CD8-positive, alpha-beta T cell (primary cell): ENCODE measurements at regions of chr1 and their contacts with region 1.

Region 1: DNA sequence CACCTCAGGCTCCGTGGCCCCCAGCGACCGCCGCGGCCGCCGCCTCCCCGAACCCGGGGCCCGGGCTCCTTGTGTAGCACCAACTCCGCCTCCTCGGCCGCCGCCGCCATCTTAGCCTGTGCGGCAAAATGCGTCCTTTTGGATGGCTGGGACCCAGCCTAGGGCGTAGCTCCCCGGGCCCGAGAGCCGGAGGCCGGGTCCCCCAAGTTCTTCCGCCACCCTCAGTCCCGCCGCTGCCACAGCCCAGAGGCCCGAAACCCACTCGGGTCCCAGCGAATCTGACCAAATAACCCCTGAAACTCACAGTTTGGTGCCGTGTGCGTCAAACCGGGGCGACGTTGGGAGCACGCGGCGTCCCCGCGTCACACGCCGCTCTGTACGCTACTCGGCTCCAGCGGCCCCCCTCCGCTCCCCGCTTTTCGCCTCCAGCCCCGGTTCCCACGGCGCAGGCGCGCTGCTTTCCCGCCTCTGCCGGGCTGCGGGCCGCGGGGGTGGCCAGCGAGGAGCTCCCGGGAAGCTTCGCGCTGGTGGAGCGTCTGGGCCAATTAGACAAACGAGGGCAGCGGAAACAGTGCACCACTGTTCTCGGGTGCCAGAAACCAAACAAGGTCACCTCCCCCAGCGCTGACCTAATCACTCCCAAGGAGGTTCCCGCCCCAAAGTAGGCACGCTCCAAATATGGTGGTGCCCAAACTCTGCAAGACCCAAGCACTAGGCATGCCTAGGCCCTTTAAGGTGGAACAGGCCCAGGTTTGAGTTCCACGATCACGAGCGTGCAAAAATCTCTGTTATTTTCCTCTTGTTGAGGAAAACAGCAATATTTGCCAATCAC is at the start of gene ZNF644:
- DNase-seq: peak; percentile 76 to 97 (median 89)
- ATAC-seq: peak; percentile 84
- H3K4me3 ChIP-seq: peak within 1 kb of the TSS; percentile 75 to 98
- H3K4me3 Mint-ChIP-seq: peak within 1 kb of the TSS; percentile 97
- H3K27ac ChIP-seq: peak within 1 kb of the TSS; percentile 99 to 100
- H3K27ac Mint-ChIP-seq: peak within 1 kb of the TSS; percentile 99
- H3K4me1 ChIP-seq: peaks cover 49% of the 10 kb centered on the region
- H3K4me1 Mint-ChIP-seq: peaks cover 64% of the 10 kb centered on the region
- H3K27me3 ChIP-seq: no peaks in the 10 kb centered on the region
- H3K27me3 Mint-ChIP-seq: no peaks in the 10 kb centered on the region
- CTCF ChIP-seq: no peak
- total RNA-seq, gene ZNF644: 105 to 109 TPM

Region 2: GRCh38 chr1:90729504-90730242 is 292.2 kb before region 1 on chr1:
- CTCF ChIA-PET with region 1: no interaction called
- POLR2A ChIA-PET with region 1: no interaction called
- intact Hi-C with region 1: loop called (anchors 5 kb)
- DNase-seq: peak in 1 of 9 experiments; percentile 27
- ATAC-seq: peak; percentile 21
- H3K4me3 ChIP-seq: peak overlapping the region in 1 of 2 experiments; percentile 22
- H3K4me3 Mint-ChIP-seq: peak overlapping the region; percentile 79
- H3K27ac ChIP-seq: no peak overlapping the region
- H3K27ac Mint-ChIP-seq: no peak overlapping the region
- H3K4me1 ChIP-seq: peaks cover 40% of the 10 kb centered on the region
- H3K4me1 Mint-ChIP-seq: peaks cover 52% of the 10 kb centered on the region
- H3K27me3 ChIP-seq: peaks cover 41 to 64% of the 10 kb centered on the region in 2 experiments
- H3K27me3 Mint-ChIP-seq: peaks cover 85% of the 10 kb centered on the region
- CTCF ChIP-seq: peak; percentile 34

Region 3: GRCh38 chr1:90850898-90851710 is 170.8 kb before region 1 on chr1:
- CTCF ChIA-PET with region 1: no interaction called
- POLR2A ChIA-PET with region 1: no interaction called
- intact Hi-C with region 1: loop called (anchors 1 to 5 kb)
- DNase-seq: peak; percentile 41 to 87 (median 73)
- ATAC-seq: peak; percentile 96
- H3K4me3 ChIP-seq: peak overlapping the region; percentile 64 to 78
- H3K4me3 Mint-ChIP-seq: peak overlapping the region; percentile 81
- H3K27ac ChIP-seq: no peak overlapping the region
- H3K27ac Mint-ChIP-seq: no peak overlapping the region
- H3K4me1 ChIP-seq: peaks cover 15% of the 10 kb centered on the region
- H3K4me1 Mint-ChIP-seq: peaks cover 12% of the 10 kb centered on the region
- H3K27me3 ChIP-seq: peaks cover 14 to 18% of the 10 kb centered on the region in 2 experiments
- H3K27me3 Mint-ChIP-seq: peaks cover 53% of the 10 kb centered on the region
- CTCF ChIP-seq: peak; percentile 62

Region 4: DNA sequence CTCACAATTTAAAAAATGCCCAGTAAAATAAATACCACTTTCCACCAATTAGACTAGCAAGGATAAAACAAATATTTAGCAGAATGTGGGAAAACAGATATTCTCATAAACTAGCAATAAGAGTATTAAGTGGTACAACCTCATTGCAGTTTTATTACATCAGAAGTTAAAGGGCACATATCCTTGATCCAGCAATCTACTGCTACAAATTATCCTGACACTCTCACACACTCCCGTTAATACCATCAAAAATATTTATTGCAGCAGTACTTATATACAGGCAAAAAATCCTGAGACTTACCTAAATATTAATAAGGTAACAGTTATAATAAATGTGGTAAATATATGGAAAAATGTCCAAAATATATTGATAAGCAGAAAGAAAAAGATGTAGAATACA is 44.4 kb before region 1 on chr1:
- CTCF ChIA-PET with region 1: no interaction called
- POLR2A ChIA-PET with region 1: no interaction called
- intact Hi-C with region 1: loop called in 1 of 2 experiments (anchors 5 kb)
- DNase-seq: no peak
- ATAC-seq: no peak
- H3K4me3 ChIP-seq: no peak overlapping the region
- H3K4me3 Mint-ChIP-seq: no peak overlapping the region
- H3K27ac ChIP-seq: no peak overlapping the region
- H3K27ac Mint-ChIP-seq: no peak overlapping the region
- H3K4me1 ChIP-seq: no peaks in the 10 kb centered on the region
- H3K4me1 Mint-ChIP-seq: peaks cover 49% of the 10 kb centered on the region
- H3K27me3 ChIP-seq: no peaks in the 10 kb centered on the region
- H3K27me3 Mint-ChIP-seq: no peaks in the 10 kb centered on the region
- CTCF ChIP-seq: no peak

Region 5: DNA sequence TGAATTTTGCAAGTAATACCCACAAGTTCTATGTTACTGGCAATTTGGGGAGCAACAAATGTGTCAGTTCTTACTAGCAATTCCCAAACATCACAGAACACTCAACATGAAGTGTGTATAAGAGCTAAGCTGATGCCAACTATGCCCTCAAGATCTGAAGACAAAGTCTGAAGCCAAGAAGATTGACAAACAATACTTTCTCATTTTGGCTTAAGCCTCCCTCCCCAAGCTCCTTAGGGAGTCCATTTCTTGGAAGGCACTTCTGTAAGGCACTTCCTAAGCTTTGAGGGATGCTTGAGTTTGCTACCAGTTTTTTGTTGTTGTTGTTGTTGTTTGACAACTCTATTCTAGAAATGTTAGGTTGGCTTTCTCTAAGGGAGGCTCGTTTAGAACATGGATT is 154.3 kb after region 1 on chr1:
- CTCF ChIA-PET with region 1: no interaction called
- POLR2A ChIA-PET with region 1: no interaction called
- intact Hi-C with region 1: no loop called
- DNase-seq: no peak
- ATAC-seq: no peak
- H3K4me3 ChIP-seq: no peak overlapping the region
- H3K4me3 Mint-ChIP-seq: no peak overlapping the region
- H3K27ac ChIP-seq: no peak overlapping the region
- H3K27ac Mint-ChIP-seq: no peak overlapping the region
- H3K4me1 ChIP-seq: no peaks in the 10 kb centered on the region
- H3K4me1 Mint-ChIP-seq: no peaks in the 10 kb centered on the region
- H3K27me3 ChIP-seq: no peaks in the 10 kb centered on the region
- H3K27me3 Mint-ChIP-seq: peaks cover 24% of the 10 kb centered on the region
- CTCF ChIP-seq: no peak

Region 6: GRCh38 chr1:91404151-91405012 is 382.5 kb after region 1 on chr1 and contains the start of gene HFM1:
- CTCF ChIA-PET with region 1: no interaction called
- POLR2A ChIA-PET with region 1: no interaction called
- intact Hi-C with region 1: loop called in 1 of 2 experiments (anchors 5 kb)
- DNase-seq: peak; percentile 21 to 83 (median 61)
- ATAC-seq: peak; percentile 99
- H3K4me3 ChIP-seq: peak within 1 kb of the TSS; percentile 41 to 54
- H3K4me3 Mint-ChIP-seq: peak within 1 kb of the TSS; percentile 80
- H3K27ac ChIP-seq: no peak within 1 kb of the TSS
- H3K27ac Mint-ChIP-seq: peak within 1 kb of the TSS; percentile 66
- H3K4me1 ChIP-seq: peaks cover 7% of the 10 kb centered on the region
- H3K4me1 Mint-ChIP-seq: peaks cover 11% of the 10 kb centered on the region
- H3K27me3 ChIP-seq: no peaks in the 10 kb centered on the region
- H3K27me3 Mint-ChIP-seq: peaks cover 34% of the 10 kb centered on the region
- CTCF ChIP-seq: no peak
- total RNA-seq, gene HFM1: not detected

Region 7: DNA sequence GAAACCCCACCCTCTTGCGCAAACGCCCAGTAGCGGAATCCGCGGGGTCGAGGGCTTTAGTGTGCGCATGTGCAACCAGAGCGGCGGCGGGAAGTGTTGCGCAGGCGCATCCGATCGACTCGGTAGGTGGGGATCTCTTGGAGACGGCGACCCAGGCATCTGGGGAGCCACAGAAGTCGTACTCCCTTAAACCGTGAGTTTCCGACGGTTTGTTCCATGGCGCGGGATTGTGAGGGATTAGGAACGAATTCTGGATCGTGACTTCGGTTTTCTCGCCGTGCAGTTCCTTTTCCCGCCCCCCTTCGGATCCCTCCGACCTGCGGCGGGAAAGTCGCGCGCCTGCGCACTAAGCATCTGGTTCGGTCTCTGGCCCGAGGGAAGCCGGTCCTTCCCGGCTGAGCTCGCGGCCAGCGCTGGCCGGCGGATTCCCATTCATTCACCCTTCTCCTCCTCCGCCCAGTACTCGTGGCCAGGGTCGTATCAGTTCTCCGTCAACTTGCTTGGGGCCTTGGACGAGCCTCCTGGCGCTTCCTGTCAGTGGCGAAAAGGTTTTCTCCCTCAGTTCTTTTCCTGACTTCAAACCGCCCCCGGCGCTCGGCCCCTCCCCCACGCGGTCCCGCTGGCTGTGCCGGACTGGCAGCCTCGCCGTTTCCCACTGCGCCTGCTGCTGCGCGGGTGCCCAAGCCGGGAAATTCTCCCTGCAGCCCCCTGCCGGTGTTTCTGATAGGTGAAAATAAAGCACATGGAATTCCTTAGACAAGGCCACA is 479.0 kb after region 1 on chr1 and contains the start of gene CDC7:
- CTCF ChIA-PET with region 1: no interaction called
- POLR2A ChIA-PET with region 1: no interaction called
- intact Hi-C with region 1: loop called (anchors 2 to 10 kb)
- DNase-seq: peak; percentile 56 to 92 (median 85)
- ATAC-seq: peak; percentile 83
- H3K4me3 ChIP-seq: peak within 1 kb of the TSS; percentile 88 to 98
- H3K4me3 Mint-ChIP-seq: no peak within 1 kb of the TSS
- H3K27ac ChIP-seq: peak within 1 kb of the TSS; percentile 58 to 86
- H3K27ac Mint-ChIP-seq: no peak within 1 kb of the TSS
- H3K4me1 ChIP-seq: peaks cover 10% of the 10 kb centered on the region
- H3K4me1 Mint-ChIP-seq: peaks cover 21% of the 10 kb centered on the region
- H3K27me3 ChIP-seq: no peaks in the 10 kb centered on the region
- H3K27me3 Mint-ChIP-seq: no peaks in the 10 kb centered on the region
- CTCF ChIP-seq: no peak
- total RNA-seq, gene CDC7: 2.2 to 2.7 TPM

Region 8: GRCh38 chr1:92080128-92080985 is 1058.5 kb after region 1 on chr1 and contains the start of gene BTBD8:
- CTCF ChIA-PET with region 1: no interaction called
- POLR2A ChIA-PET with region 1: no interaction called
- intact Hi-C with region 1: loop called in 1 of 2 experiments (anchors 5 kb)
- DNase-seq: peak; percentile 75 to 91 (median 88)
- ATAC-seq: peak; percentile 97
- H3K4me3 ChIP-seq: peak within 1 kb of the TSS; percentile 82 to 88
- H3K4me3 Mint-ChIP-seq: peak within 1 kb of the TSS; percentile 95
- H3K27ac ChIP-seq: peak within 1 kb of the TSS; percentile 60 to 71
- H3K27ac Mint-ChIP-seq: peak within 1 kb of the TSS; percentile 93
- H3K4me1 ChIP-seq: peaks cover 5% of the 10 kb centered on the region
- H3K4me1 Mint-ChIP-seq: peaks cover 13% of the 10 kb centered on the region
- H3K27me3 ChIP-seq: no peaks in the 10 kb centered on the region
- H3K27me3 Mint-ChIP-seq: no peaks in the 10 kb centered on the region
- CTCF ChIP-seq: no peak
- total RNA-seq, gene BTBD8: 0.72 to 1.2 TPM